Ascending aorta (tissue), 2 donors: ENCODE measurements at regions of chr12 and their contacts with region 1.

Region 1: GRCh38 chr12:11695321-11695720 is 45.8 kb downstream of the ETV6 start:
- DNase-seq: peak in 1 of 2 donors; percentile 81
- H3K4me3 ChIP-seq: no peak overlapping the region
- H3K27ac ChIP-seq: peak overlapping the region; percentile 29 to 48
- H3K4me1 ChIP-seq: peaks cover 3 to 46% of the 10 kb centered on the region in 2 donors
- H3K27me3 ChIP-seq: no peaks in the 10 kb centered on the region
- CTCF ChIP-seq: peak in 1 of 3 experiments; percentile 4

Region 2: GRCh38 chr12:11408096-11408495 is 287.2 kb before region 1 on chr12:
- intact Hi-C with region 1: no loop called
- DNase-seq: no peak
- H3K4me3 ChIP-seq: no peak overlapping the region
- H3K27ac ChIP-seq: no peak overlapping the region
- H3K4me1 ChIP-seq: no peaks in the 10 kb centered on the region
- H3K27me3 ChIP-seq: no peaks in the 10 kb centered on the region
- CTCF ChIP-seq: no peak

Region 3: DNA sequence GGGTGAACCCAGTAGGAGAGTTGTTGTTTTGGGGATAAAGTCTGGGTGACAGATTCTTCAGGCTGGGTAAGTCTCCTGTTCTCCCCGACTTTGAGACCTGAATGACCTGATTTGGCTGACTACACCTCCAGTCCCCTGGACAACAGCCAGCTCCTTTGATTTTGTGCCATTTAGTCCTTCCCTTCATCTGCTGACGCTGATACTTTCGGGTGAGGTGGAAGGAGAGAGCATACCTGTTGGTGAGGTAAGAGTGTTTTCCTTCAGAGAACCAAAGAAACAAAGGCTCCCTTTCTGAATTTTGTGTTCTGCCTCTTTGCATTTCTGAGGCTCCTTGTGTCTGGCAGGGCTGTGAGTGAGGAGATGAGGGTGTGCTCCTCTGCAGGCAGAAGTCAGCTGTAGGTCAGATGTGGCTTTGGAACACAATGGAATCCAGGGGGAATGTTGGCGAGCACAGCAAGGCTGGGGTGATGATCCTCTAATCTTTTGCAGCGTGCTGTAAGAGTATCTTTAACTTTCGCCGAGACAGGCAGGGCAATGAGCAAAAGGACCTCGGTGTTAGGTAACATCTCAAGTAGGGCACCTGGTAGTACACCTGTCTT is 33.7 kb before region 1 on chr12:
- intact Hi-C with region 1: loop called (anchors 2 kb)
- DNase-seq: no peak
- H3K4me3 ChIP-seq: no peak overlapping the region
- H3K27ac ChIP-seq: peak overlapping the region; percentile 33 to 56
- H3K4me1 ChIP-seq: peaks cover 28 to 60% of the 10 kb centered on the region in 2 donors
- H3K27me3 ChIP-seq: no peaks in the 10 kb centered on the region
- CTCF ChIP-seq: no peak

Region 4: GRCh38 chr12:11719678-11720099 is 24.4 kb after region 1 on chr12:
- intact Hi-C with region 1: no loop called
- DNase-seq: peak; percentile 39 to 89
- H3K4me3 ChIP-seq: no peak overlapping the region
- H3K27ac ChIP-seq: peak overlapping the region; percentile 64 to 72
- H3K4me1 ChIP-seq: peaks cover 4 to 47% of the 10 kb centered on the region in 2 donors
- H3K27me3 ChIP-seq: no peaks in the 10 kb centered on the region
- CTCF ChIP-seq: no peak

Region 5: GRCh38 chr12:11780521-11781101 is 85.3 kb after region 1 on chr12:
- intact Hi-C with region 1: loop called (anchors 5 kb)
- DNase-seq: no peak
- H3K4me3 ChIP-seq: no peak overlapping the region
- H3K27ac ChIP-seq: peak overlapping the region; percentile 88 to 89
- H3K4me1 ChIP-seq: peaks cover 22 to 58% of the 10 kb centered on the region in 2 donors
- H3K27me3 ChIP-seq: no peaks in the 10 kb centered on the region
- CTCF ChIP-seq: no peak